Calu3 (cell line): ENCODE measurements at regions of chr19 and their contacts with region 1.

Region 1: GRCh38 chr19:19138169-19138981 is at the start of gene TMEM161A:
- DNase-seq: peak; percentile 94
- H3K4me3 Mint-ChIP-seq: peak within 1 kb of the TSS; percentile 97
- H3K27ac Mint-ChIP-seq: peak within 1 kb of the TSS; percentile 96
- H3K4me1 Mint-ChIP-seq: peaks cover 12% of the 10 kb centered on the region
- H3K27me3 Mint-ChIP-seq: no peaks in the 10 kb centered on the region
- CTCF ChIP-seq: no peak
- total RNA-seq, gene TMEM161A: 24.0 and 28.9 TPM in 2 replicates

Region 2: GRCh38 chr19:19053508-19054314 is 84.7 kb before region 1 on chr19:
- CTCF ChIA-PET with region 1: no interaction called
- intact Hi-C with region 1: loop called (anchors 2 kb)
- DNase-seq: peak; percentile 56
- H3K4me3 Mint-ChIP-seq: no peak overlapping the region
- H3K27ac Mint-ChIP-seq: no peak overlapping the region
- H3K4me1 Mint-ChIP-seq: no peaks in the 10 kb centered on the region
- H3K27me3 Mint-ChIP-seq: no peaks in the 10 kb centered on the region
- CTCF ChIP-seq: peak; percentile 50

Region 3: GRCh38 chr19:19081642-19082151 is 56.7 kb before region 1 on chr19:
- CTCF ChIA-PET with region 1: no interaction called
- intact Hi-C with region 1: no loop called
- DNase-seq: no peak
- H3K4me3 Mint-ChIP-seq: no peak overlapping the region
- H3K27ac Mint-ChIP-seq: no peak overlapping the region
- H3K4me1 Mint-ChIP-seq: no peaks in the 10 kb centered on the region
- H3K27me3 Mint-ChIP-seq: no peaks in the 10 kb centered on the region
- CTCF ChIP-seq: no peak

Region 4: DNA sequence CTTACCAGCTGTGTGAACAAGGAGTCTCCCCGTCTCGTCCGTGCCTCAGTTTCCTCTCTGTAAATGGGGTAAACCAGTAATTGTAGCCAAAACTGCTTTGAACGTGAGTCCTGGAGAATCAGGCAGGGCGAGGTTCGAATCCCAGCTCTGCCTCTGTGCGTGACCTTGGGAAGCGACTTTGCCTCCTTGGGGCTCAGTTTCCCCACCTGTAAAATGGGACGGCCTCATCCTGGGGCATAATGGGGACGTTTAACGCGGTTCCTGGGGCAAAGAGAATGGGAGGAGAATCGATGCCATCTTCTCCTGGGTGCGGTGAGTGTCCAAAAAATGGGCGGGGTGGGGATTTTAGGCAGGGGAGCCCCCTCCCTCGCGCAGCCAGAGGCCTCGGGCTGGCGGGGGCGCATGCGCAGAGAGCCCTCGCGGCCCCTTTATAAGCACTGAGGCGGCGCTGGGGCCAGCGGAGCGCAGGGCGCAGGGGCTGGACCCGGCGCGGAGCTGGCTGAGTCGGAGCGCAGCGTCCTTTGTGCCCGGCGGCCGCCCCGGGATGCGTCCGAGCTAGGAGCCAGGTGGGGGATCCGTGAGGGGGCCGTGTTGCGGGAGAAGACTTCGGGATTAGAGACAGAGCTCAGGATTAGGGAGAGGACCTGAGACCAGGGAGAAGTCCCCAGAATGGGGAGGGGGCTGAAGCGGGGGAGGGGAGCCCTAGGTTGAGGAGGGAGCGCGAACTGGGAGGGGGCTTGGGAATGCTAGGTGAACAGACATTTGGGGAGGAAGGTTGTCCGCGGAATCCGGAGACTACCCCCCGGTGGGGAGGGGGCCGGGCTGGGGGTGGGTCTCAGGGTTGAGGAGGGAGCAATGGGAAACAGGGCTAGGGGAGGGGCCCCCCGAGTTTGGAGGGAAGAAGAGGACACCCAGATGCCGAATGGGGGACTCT is 73.4 kb after region 1 on chr19 and contains the start of gene NCAN:
- CTCF ChIA-PET with region 1: no interaction called
- intact Hi-C with region 1: no loop called
- DNase-seq: no peak
- H3K4me3 Mint-ChIP-seq: no peak within 1 kb of the TSS
- H3K27ac Mint-ChIP-seq: no peak within 1 kb of the TSS
- H3K4me1 Mint-ChIP-seq: no peaks in the 10 kb centered on the region
- H3K27me3 Mint-ChIP-seq: peaks cover 66% of the 10 kb centered on the region
- CTCF ChIP-seq: no peak
- total RNA-seq, gene NCAN: not detected in 2 replicates